ENCODE measurements at regions of chr14 and their contacts with region 1.

Region 1: DNA sequence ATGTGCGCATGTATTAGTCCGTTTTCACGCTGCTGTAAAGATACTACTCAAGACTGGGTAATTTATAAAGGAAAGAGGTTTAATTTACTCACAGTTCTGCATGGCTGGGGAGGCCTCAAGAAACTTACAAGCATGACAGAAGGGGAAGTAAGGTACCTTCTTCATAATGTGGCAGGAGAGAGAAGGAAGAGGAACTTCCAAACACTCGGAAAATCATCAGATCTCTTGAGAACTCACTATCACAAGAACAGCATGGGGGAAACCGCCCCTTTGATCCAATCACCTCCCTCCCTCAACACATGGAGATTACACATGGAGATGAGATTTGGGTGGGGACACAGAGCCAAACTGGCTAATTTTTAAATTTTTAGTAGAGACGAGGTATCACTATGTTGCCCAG is 41.8 kb upstream of the SNX6 start:
- DNase-seq: no peak

Region 2: GRCh38 chr14:34722717-34723545 is 51.2 kb after region 1 on chr14:
- intact Hi-C with region 1: loop called (anchors 2 kb)
- DNase-seq: no peak